Activated naive CD8-positive, alpha-beta T cell treated with anti-CD3 and anti-CD28 coated beads, Interleukin-2, amount 10 ng/mL, durations not matched to agents 7 days and 5 days (primary cell): ENCODE measurements at regions of chr4 and their contacts with region 1.

Region 1: DNA sequence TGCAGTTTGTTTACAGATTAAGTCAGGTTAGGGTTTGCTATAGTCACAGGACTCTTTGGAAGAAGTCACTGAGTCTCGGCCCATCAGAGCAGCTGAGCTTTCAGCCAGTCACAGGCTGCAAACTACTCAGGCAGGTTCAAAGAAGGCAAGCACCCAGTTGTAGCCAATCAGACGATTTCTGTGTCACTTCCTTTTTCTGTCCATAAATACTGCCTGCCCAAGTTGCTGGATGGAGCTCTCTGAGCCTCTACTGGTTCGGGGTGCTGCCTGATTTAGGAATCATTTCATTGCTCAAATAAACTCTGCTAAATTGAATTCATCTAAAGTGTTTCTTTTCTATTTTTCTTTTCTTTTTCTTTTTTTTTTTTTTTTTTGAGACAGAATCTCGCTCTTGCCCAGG is 7.3 kb upstream of the SH3BP2 start:
- DNase-seq: no peak
- ATAC-seq: peak; percentile 74
- H3K4me3 Mint-ChIP-seq: no peak overlapping the region
- H3K27ac Mint-ChIP-seq: peak overlapping the region; percentile 47
- H3K4me1 Mint-ChIP-seq: peaks cover 22% of the 10 kb centered on the region
- H3K27me3 Mint-ChIP-seq: peaks cover 10% of the 10 kb centered on the region

Region 2: DNA sequence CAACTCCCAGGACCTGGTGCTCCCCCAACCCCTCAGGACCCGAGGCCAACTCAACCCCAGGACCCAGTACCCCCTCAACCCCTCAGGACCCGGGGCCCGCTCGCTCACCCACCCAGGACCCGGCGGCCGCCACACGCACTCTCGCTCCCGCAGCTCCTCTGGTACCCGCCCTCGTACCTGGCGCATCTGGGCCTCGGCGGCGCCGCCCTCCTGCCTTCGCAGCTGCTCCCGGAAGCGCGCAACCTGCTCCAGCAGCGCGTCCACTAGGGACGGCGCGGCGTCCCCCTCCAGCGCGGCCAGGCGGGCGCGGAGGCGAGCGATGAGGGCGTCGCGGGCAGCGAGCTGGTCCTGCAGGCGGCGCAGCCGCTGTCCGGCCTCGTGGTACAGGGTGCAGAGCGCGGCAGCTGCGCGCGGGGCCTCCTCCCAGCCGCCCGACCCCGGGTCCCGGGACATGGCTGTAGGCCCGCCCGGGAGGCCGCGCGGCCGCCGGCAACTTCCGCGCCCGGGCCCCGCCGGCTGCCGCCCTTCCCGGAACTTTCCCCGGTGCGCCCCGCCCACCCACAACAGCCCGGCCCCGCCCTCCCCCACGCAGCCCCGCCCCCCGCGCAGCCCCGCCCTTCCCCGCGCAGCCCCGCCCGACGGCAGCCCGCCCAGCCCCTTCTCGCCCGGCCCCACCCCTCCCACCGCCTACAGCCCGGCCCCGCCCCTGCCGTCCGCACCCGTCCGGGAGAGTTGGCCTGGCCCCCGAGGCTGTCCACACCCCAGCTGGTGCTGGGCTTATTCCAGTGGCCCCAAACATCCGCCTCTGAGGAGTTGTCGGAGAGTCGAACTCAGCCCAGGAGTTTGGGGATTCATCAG is 29.5 kb before region 1 on chr4 and contains the start of gene TNIP2:
- POLR2A ChIA-PET with region 1: no interaction called
- DNase-seq: peak; percentile 87
- ATAC-seq: peak; percentile 86
- H3K4me3 Mint-ChIP-seq: peak within 1 kb of the TSS; percentile 84
- H3K27ac Mint-ChIP-seq: peak within 1 kb of the TSS; percentile 83
- H3K4me1 Mint-ChIP-seq: peaks cover 16% of the 10 kb centered on the region
- H3K27me3 Mint-ChIP-seq: no peaks in the 10 kb centered on the region
- total RNA-seq, gene TNIP2: 47.0 to 50.0 TPM

Region 3: DNA sequence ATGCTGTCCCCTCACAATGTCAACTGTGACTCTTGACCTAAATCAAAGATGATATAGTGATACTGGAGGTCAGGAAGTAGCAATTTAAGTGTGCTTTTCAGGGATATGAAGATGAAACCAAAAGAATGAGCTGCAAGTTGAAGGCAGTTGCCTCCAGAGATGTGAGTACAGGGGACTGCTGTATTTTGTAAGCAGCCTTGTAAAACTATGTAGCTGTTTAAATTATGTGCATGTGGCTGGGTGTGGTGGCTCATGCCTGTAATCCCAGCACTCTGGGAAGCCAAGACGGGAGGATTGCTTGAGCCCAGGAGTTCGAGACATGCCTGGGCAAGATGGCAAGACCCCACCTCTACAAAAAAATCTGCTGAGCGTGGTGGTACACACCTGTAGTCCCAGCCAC is 14.3 kb before region 1 on chr4:
- POLR2A ChIA-PET with region 1: interaction called, 11 read pairs
- DNase-seq: no peak
- ATAC-seq: peak; percentile 79
- H3K4me3 Mint-ChIP-seq: peak overlapping the region; percentile 60
- H3K27ac Mint-ChIP-seq: peak overlapping the region; percentile 65
- H3K4me1 Mint-ChIP-seq: peaks cover 30% of the 10 kb centered on the region
- H3K27me3 Mint-ChIP-seq: no peaks in the 10 kb centered on the region

Region 4: GRCh38 chr4:2800691-2801596 is 15.3 kb after region 1 on chr4:
- POLR2A ChIA-PET with region 1: interaction called, 17 read pairs
- DNase-seq: peak; percentile 45
- ATAC-seq: peak; percentile 25
- H3K4me3 Mint-ChIP-seq: peak overlapping the region; percentile 95
- H3K27ac Mint-ChIP-seq: peak overlapping the region; percentile 78
- H3K4me1 Mint-ChIP-seq: peaks cover 31% of the 10 kb centered on the region
- H3K27me3 Mint-ChIP-seq: no peaks in the 10 kb centered on the region

Region 5: DNA sequence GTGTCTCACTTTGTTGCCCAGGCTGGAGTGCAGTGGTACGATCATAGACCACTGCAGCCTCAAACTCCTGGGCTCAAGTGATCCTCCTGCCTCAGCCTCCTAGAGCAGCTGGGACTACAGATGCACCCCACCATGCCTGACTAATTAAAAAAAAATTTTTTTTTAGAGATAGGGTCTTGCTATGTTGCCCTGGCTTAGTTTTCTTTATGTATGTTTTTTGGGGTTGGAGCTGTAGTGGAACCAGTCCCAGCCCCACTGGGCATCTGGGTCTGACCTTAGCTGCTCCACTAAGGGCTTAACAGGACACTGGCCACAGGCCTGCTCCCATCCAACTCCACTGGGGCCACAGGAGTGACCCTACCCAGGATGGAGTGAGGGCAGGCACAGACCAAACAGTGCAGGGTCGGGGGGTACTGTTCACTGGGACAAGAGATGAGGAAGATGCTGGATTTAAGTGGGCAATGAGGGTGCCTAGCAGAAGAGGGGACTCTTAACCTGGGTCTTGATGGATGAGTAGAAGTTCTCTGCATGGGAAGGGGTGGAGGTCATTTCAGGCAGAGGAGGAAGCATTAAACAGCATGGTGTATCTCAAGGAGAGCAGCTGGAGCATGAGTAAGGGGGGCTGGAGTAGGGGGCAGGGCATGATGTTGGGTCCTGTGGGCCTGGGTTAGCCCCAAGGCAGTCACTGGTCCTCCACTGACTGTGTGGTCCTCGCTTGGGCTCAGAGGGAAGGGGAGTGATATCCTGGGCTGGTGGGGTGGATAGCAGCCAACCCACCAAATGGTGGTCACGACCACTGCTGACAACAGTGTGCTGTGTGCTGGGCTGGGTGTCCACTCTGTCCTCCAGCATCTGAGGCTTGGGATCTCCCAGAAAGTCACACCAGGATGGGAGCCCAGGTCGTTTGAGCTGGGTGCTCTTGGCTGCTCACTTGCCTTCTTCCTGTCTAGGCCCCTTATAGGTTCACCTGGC is 33.9 kb after region 1 on chr4:
- POLR2A ChIA-PET with region 1: no interaction called
- DNase-seq: no peak
- ATAC-seq: no peak
- H3K4me3 Mint-ChIP-seq: peak overlapping the region; percentile 39
- H3K27ac Mint-ChIP-seq: peak overlapping the region; percentile 83
- H3K4me1 Mint-ChIP-seq: peaks cover 34% of the 10 kb centered on the region
- H3K27me3 Mint-ChIP-seq: no peaks in the 10 kb centered on the region